Activated CD8-positive, alpha-beta T cell treated with anti-CD3 and anti-CD28 coated beads for 36 hours (primary cell): ENCODE measurements at regions of chr6 and their contacts with region 1.

Region 1: GRCh38 chr6:31971993-31972708 is at the start of gene DXO:
- DNase-seq: peak; percentile 99
- ATAC-seq: peak; percentile 95
- H3K4me3 Mint-ChIP-seq: peak within 1 kb of the TSS; percentile 94
- H3K27ac Mint-ChIP-seq: peak within 1 kb of the TSS; percentile 99
- H3K4me1 Mint-ChIP-seq: peaks cover 33% of the 10 kb centered on the region
- H3K27me3 Mint-ChIP-seq: peaks cover 2% of the 10 kb centered on the region
- CTCF ChIP-seq: no peak
- total RNA-seq, gene DXO: 13.0 to 13.1 TPM

Region 2: GRCh38 chr6:31958741-31959739 is 13.1 kb before region 1 on chr6 and contains the starts of genes NELFE and SKIC2:
- CTCF ChIA-PET with region 1: interaction called, 3 read pairs
- POLR2A ChIA-PET with region 1: interaction called, 85 read pairs
- intact Hi-C with region 1: no loop called
- DNase-seq: peak; percentile 98
- ATAC-seq: peak; percentile 99
- H3K4me3 Mint-ChIP-seq: peak within 1 kb of the TSS; percentile 98
- H3K27ac Mint-ChIP-seq: peak within 1 kb of the TSS; percentile 98
- H3K4me1 Mint-ChIP-seq: peaks cover 35% of the 10 kb centered on the region
- H3K27me3 Mint-ChIP-seq: no peaks in the 10 kb centered on the region
- CTCF ChIP-seq: no peak
- total RNA-seq, gene NELFE: 60.5 to 61.0 TPM
- total RNA-seq, gene SKIC2: 76.5 to 77.3 TPM

Region 3: DNA sequence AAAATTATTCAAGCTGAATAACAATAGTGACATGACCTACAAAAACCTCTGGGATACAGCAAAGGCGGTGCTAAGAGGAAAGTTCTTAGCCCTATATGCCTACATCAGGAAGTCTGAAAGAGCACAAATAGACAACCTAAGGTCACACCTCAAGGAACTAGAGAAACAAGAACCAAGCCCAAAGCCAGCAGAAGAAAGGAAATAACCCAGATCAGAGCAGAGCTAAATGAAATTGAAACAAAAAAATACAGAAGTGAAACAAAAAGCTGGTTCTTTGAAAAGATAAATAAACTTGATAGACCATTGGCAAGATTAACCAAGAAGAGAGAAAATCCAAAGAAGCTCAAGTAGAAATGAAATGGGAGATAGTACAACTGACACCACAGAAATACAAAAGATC is 299.3 kb after region 1 on chr6:
- CTCF ChIA-PET with region 1: no interaction called
- POLR2A ChIA-PET with region 1: no interaction called
- intact Hi-C with region 1: no loop called
- DNase-seq: no peak
- ATAC-seq: no peak
- H3K4me3 Mint-ChIP-seq: no peak overlapping the region
- H3K27ac Mint-ChIP-seq: no peak overlapping the region
- H3K4me1 Mint-ChIP-seq: peaks cover 15% of the 10 kb centered on the region
- H3K27me3 Mint-ChIP-seq: peaks cover 3% of the 10 kb centered on the region
- CTCF ChIP-seq: no peak

Region 4: GRCh38 chr6:32752580-32752979 is 780.4 kb after region 1 on chr6:
- CTCF ChIA-PET with region 1: no interaction called
- POLR2A ChIA-PET with region 1: no interaction called
- intact Hi-C with region 1: no loop called
- DNase-seq: no peak
- ATAC-seq: no peak
- H3K4me3 Mint-ChIP-seq: no peak overlapping the region
- H3K27ac Mint-ChIP-seq: no peak overlapping the region
- H3K4me1 Mint-ChIP-seq: no peaks in the 10 kb centered on the region
- H3K27me3 Mint-ChIP-seq: peaks cover 27% of the 10 kb centered on the region
- CTCF ChIP-seq: no peak